ENCODE measurements at regions of chr2 and their contacts with region 1.

Region 1: GRCh38 chr2:239267288-239267951 is 133.4 kb downstream of the HDAC4 start:
- DNase-seq: peak; percentile 80 to 97 (median 90)
- ATAC-seq: peak; percentile 74
- H3K4me3 ChIP-seq: peak overlapping the region; percentile 68
- H3K4me3 Mint-ChIP-seq: peak overlapping the region; percentile 91
- H3K27ac ChIP-seq: peak overlapping the region; percentile 73 to 83
- H3K27ac Mint-ChIP-seq: peak overlapping the region; percentile 95
- H3K4me1 ChIP-seq: peaks cover 80% of the 10 kb centered on the region
- H3K4me1 Mint-ChIP-seq: peaks cover 81% of the 10 kb centered on the region
- H3K27me3 ChIP-seq: no peaks in the 10 kb centered on the region
- H3K27me3 Mint-ChIP-seq: no peaks in the 10 kb centered on the region
- CTCF ChIP-seq: peak; percentile 69

Region 2: DNA sequence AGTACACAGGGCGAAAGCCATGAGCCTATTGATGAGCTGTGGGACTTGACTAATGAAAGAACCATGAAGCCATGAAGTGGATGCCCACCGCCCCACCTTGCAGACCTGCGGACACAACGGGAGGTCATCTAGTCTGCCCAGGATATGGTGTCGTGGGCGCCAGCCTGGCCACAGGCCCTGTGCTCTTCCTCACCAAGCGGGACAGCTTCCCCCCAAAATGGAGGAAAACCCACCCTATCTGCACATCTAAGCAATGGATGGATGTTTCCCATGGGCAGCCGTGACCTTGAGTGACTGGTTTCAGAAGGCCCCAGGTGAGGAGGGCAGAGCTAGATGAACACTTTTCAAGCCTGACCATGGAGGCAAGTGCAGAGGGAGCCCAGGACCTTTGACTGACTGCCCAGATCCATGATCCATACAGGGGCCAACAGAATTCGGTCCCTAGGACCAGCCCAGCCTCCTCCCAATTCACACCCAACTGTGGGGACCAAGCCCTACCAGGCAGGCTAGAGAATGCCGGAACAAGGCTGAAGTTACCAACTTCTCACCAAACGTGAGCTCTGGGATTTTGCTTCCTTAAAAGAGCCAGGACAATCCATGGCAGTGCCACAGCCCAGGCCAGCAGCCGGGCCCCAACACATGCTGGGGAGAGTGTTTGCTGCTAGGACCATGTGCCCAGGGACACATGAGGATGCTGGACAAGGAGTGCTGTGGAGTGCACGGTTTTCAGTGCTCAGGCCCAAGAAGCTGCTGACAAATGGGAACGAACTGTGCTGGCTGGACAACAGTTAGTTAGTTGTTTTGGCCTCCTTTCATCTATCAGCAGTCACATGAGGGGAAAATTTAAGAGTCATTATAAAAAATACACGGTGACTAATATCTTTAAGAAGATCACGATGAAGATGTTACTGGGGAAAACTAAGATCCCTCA is 116.0 kb before region 1 on chr2:
- CTCF ChIA-PET with region 1: no interaction called
- POLR2A ChIA-PET with region 1: no interaction called
- intact Hi-C with region 1: loop called in 1 of 2 experiments (anchors 5 kb)
- DNase-seq: peak in 1 of 14 experiments; percentile 27
- ATAC-seq: no peak
- H3K4me3 ChIP-seq: no peak overlapping the region
- H3K4me3 Mint-ChIP-seq: no peak overlapping the region
- H3K27ac ChIP-seq: peak overlapping the region; percentile 22 to 84
- H3K27ac Mint-ChIP-seq: peak overlapping the region; percentile 77
- H3K4me1 ChIP-seq: peaks cover 22% of the 10 kb centered on the region
- H3K4me1 Mint-ChIP-seq: peaks cover 19% of the 10 kb centered on the region
- H3K27me3 ChIP-seq: no peaks in the 10 kb centered on the region
- H3K27me3 Mint-ChIP-seq: no peaks in the 10 kb centered on the region
- CTCF ChIP-seq: no peak

Region 3: DNA sequence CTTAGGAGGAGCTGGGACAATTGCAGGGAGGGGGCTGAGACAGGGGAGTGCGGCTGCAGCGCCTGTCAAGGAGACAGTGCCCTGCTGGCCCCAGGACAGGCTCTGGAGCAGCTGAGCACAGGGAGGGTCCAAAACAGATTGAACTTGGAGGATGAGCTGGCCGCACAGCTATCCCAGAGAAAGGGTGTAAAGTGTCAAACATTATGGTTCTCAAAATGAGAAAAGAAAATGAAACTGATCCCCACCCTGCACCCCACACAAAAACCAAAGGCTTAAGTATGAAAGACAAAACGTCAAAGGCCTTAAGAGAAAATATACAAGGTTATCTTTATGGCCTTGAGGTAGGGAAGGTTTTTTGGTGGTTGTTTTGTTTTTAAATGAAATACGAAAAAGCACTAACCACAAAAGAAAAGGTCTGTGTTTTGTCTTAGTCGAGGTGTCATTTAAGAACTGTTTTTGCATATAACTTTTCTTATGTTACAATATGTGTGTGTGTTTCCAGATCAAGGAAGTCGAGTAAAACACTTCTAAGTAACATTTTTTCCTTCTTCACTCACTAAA is 21.6 kb after region 1 on chr2:
- CTCF ChIA-PET with region 1: interaction called, 79 read pairs
- POLR2A ChIA-PET with region 1: interaction called, 87 read pairs
- intact Hi-C with region 1: loop called in 1 of 2 experiments (anchors 1 kb)
- DNase-seq: peak in 6 of 14 experiments; percentile 19 to 74 (median 55)
- ATAC-seq: peak; percentile 68
- H3K4me3 ChIP-seq: peak overlapping the region; percentile 39
- H3K4me3 Mint-ChIP-seq: peak overlapping the region; percentile 82
- H3K27ac ChIP-seq: peak overlapping the region; percentile 73 to 81
- H3K27ac Mint-ChIP-seq: peak overlapping the region; percentile 95
- H3K4me1 ChIP-seq: peaks cover 63% of the 10 kb centered on the region
- H3K4me1 Mint-ChIP-seq: peaks cover 75% of the 10 kb centered on the region
- H3K27me3 ChIP-seq: no peaks in the 10 kb centered on the region
- H3K27me3 Mint-ChIP-seq: no peaks in the 10 kb centered on the region
- CTCF ChIP-seq: no peak

Region 4: DNA sequence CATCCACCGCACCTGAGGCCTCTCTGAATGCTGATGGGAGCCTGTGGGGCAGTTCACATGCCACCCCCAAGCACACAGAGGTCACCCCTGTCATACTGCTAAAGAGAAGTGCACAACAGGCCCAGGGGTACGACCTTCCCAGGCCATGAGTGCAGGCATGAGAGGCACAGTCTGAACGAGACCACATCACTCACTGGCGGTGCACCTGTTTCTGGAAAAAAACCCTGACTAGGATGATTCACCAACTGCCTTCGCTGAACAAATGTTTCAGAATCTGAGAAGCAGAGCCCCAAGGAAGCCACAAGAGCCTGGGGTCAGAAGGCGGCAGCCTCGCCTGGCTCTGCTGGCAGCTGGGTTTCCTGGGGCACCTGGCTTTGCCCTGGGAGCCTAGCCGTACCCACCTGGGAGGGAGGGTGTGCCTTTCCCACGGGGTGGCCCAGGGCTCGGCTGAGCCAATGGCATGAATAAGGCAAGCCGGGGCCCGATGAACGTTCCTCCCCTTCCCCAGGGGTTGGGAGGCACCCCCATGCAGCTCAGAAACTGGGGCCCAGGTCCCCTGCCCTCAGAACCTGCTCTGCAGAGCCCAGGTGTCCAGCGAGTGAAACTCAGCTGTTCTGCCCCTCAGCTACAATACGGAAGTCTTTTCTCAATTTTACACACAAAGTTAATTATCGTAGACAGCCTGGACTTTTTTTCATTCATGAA is 59.6 kb after region 1 on chr2:
- CTCF ChIA-PET with region 1: interaction called, 20 read pairs
- POLR2A ChIA-PET with region 1: interaction called, 13 read pairs
- intact Hi-C with region 1: loop called (anchors 2 kb)
- DNase-seq: peak; percentile 46 to 89 (median 74)
- ATAC-seq: peak; percentile 77
- H3K4me3 ChIP-seq: no peak overlapping the region
- H3K4me3 Mint-ChIP-seq: peak overlapping the region; percentile 75
- H3K27ac ChIP-seq: peak overlapping the region; percentile 71 to 73
- H3K27ac Mint-ChIP-seq: peak overlapping the region; percentile 93
- H3K4me1 ChIP-seq: peaks cover 78% of the 10 kb centered on the region
- H3K4me1 Mint-ChIP-seq: peaks cover 85% of the 10 kb centered on the region
- H3K27me3 ChIP-seq: no peaks in the 10 kb centered on the region
- H3K27me3 Mint-ChIP-seq: no peaks in the 10 kb centered on the region
- CTCF ChIP-seq: no peak

Region 5: DNA sequence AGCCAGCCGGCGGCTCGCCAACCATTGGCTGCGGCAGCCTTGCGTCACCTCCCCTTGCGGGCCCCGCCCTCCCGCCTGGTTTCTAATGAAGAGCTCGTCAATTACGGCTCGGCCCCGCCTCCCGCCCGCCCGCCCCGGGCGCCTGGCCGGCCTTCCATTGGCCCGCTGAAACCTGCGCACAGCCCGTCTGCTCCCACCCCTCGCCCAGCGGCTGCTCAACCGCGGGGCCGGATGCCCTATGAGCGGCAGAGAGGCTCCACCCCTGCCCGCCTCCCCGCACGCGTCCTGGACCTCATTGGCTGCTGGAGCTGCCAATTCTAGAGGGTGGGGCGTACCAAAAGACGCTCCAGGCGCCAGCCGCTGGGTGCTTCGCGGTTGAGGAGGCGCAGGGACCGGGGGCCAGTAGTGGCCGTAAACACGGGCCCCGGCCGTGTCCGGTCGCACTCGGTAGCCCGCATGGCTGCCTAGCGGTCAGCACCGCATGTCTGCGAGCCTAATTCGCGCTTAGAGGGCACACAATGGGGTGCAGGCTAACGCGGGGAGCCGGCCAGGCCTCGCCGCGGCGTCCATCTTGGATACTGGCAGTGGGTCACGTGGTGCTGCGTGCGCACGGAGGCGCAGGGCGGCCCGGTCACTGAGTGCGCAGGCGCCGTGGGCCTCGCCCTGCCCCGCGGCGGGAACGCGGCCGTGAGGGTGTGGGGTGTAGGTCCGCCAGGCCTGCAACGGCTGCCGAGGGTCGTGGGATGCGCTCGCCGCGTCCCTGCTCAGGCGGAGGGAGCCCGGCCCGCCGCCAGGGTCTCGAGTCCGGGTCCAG is 133.9 kb after region 1 on chr2:
- CTCF ChIA-PET with region 1: interaction called, 41 read pairs
- POLR2A ChIA-PET with region 1: interaction called, 64 read pairs
- intact Hi-C with region 1: loop called (anchors 1 to 2 kb)
- DNase-seq: peak; percentile 98 to 100 (median 99)
- ATAC-seq: peak; percentile 86
- H3K4me3 ChIP-seq: peak overlapping the region; percentile 67
- H3K4me3 Mint-ChIP-seq: peak overlapping the region; percentile 98
- H3K27ac ChIP-seq: peak overlapping the region; percentile 97 to 99
- H3K27ac Mint-ChIP-seq: peak overlapping the region; percentile 99
- H3K4me1 ChIP-seq: peaks cover 37% of the 10 kb centered on the region
- H3K4me1 Mint-ChIP-seq: peaks cover 48% of the 10 kb centered on the region
- H3K27me3 ChIP-seq: no peaks in the 10 kb centered on the region
- H3K27me3 Mint-ChIP-seq: no peaks in the 10 kb centered on the region
- CTCF ChIP-seq: no peak

Region 6: GRCh38 chr2:239991689-239992314 is 724.4 kb after region 1 on chr2:
- CTCF ChIA-PET with region 1: no interaction called
- POLR2A ChIA-PET with region 1: no interaction called
- intact Hi-C with region 1: loop called in 1 of 2 experiments (anchors 5 kb)
- DNase-seq: peak in 3 of 14 experiments; percentile 55 to 68 (median 66)
- ATAC-seq: peak; percentile 69
- H3K4me3 ChIP-seq: no peak overlapping the region
- H3K4me3 Mint-ChIP-seq: no peak overlapping the region
- H3K27ac ChIP-seq: no peak overlapping the region
- H3K27ac Mint-ChIP-seq: no peak overlapping the region
- H3K4me1 ChIP-seq: no peaks in the 10 kb centered on the region
- H3K4me1 Mint-ChIP-seq: peaks cover 5% of the 10 kb centered on the region
- H3K27me3 ChIP-seq: no peaks in the 10 kb centered on the region
- H3K27me3 Mint-ChIP-seq: no peaks in the 10 kb centered on the region
- CTCF ChIP-seq: peak; percentile 89